ENCODE measurements at regions of chr14 and their contacts with region 1.

Region 1: DNA sequence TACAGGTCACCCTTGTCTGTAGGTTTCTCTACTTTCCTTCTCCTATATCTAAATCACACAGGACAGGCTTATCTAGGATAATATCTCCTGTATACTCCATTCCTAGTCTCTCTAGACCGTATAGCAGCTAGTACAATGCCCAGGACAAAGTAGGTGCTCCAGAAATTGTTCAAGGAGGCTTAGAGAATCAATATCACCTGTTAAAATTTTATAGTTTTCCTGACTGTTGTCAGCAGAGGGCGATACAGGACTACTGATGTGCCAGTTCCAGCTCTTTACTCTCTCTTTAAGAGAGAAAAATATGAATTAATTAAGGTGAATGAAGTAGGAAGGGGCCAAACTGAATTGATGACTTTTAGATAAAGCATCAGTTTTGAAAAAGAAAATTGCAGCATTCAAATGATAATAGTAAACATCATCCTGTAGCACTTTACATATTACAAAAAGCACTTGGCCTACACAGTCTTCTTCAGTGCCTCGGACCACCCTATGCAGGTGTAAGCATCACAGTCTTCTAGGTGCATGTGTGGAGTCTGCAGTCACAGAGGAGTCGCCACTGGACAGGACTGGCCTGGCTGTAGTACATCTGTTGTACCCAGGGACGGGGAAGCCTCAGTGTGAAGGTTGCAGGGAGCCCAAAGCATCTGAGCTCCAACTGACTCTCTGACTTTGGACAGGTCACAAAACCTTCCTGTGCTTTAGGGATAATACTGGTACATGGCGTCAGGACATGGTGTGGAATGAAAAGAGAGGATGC is 61.9 kb upstream of the MAX start:
- DNase-seq: peak; percentile 58
- H3K4me3 ChIP-seq: no peak overlapping the region
- H3K27ac ChIP-seq: no peak overlapping the region
- H3K4me1 ChIP-seq: no peaks in the 10 kb centered on the region
- H3K27me3 ChIP-seq: no peaks in the 10 kb centered on the region
- CTCF ChIP-seq: peak; percentile 36 to 41
- POLR2A ChIP-seq: no peak

Region 2: DNA sequence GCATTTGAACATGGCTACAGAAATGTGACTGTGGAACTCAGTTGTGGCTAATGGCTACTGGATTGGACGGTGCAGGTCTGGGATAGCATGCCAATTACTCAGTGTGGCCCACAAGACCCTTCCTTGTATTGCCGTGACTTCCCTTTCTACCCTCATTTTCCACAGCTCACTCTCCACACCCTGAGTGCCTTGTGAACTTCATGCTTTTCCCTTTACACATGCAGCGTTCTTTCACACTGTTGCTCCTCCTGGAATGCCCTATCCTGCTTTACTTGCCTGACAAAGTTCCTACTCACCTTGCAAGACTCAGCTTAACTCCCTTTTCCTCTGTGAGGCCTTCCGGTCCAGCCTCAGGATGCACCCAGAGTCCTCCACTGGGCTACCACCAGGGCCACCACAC is 15.1 kb before region 1 on chr14:
- CTCF ChIA-PET with region 1: interaction called, 13 read pairs
- POLR2A ChIA-PET with region 1: no interaction called
- dilution Hi-C with region 1: no loop called
- intact Hi-C with region 1: no loop called
- DNase-seq: no peak
- H3K4me3 ChIP-seq: no peak overlapping the region
- H3K27ac ChIP-seq: no peak overlapping the region
- H3K4me1 ChIP-seq: no peaks in the 10 kb centered on the region
- H3K27me3 ChIP-seq: peaks cover 2 to 3% of the 10 kb centered on the region in 2 experiments
- CTCF ChIP-seq: no peak
- POLR2A ChIP-seq: no peak

Region 3: DNA sequence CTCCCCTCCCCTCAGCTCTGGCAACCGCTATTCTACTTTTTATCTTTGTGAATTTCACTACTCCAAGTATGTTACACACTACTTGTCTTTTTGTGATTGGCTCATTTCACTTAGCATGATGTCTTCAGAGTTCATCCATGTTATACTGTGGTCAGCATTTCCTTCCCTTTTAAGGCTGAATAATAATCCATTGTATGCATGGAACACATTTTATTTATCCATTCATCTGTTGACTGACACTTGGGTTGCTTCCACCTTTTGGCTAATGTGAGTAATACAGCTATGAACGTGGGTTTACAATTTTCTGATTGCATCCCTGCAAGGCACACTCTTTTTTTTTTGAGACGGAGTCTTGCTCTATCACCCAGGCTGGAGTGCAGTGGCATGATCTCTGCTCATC is 195.3 kb after region 1 on chr14:
- CTCF ChIA-PET with region 1: interaction called, 14 read pairs
- POLR2A ChIA-PET with region 1: no interaction called
- dilution Hi-C with region 1: no loop called
- intact Hi-C with region 1: no loop called
- DNase-seq: peak; percentile 62
- H3K4me3 ChIP-seq: no peak overlapping the region
- H3K27ac ChIP-seq: no peak overlapping the region
- H3K4me1 ChIP-seq: peaks cover 13% of the 10 kb centered on the region
- H3K27me3 ChIP-seq: no peaks in the 10 kb centered on the region
- CTCF ChIP-seq: no peak
- POLR2A ChIP-seq: no peak

Region 4: GRCh38 chr14:65832431-65833266 is 668.4 kb after region 1 on chr14:
- CTCF ChIA-PET with region 1: interaction called, 82 read pairs
- POLR2A ChIA-PET with region 1: no interaction called
- dilution Hi-C with region 1: no loop called
- intact Hi-C with region 1: loop called (anchors 1 kb)
- DNase-seq: peak; percentile 27
- H3K4me3 ChIP-seq: no peak overlapping the region
- H3K27ac ChIP-seq: no peak overlapping the region
- H3K4me1 ChIP-seq: no peaks in the 10 kb centered on the region
- H3K27me3 ChIP-seq: peaks cover 0 to 5% of the 10 kb centered on the region in 2 experiments
- CTCF ChIP-seq: peak in 1 of 2 donors; percentile 38
- POLR2A ChIP-seq: no peak

Region 5: DNA sequence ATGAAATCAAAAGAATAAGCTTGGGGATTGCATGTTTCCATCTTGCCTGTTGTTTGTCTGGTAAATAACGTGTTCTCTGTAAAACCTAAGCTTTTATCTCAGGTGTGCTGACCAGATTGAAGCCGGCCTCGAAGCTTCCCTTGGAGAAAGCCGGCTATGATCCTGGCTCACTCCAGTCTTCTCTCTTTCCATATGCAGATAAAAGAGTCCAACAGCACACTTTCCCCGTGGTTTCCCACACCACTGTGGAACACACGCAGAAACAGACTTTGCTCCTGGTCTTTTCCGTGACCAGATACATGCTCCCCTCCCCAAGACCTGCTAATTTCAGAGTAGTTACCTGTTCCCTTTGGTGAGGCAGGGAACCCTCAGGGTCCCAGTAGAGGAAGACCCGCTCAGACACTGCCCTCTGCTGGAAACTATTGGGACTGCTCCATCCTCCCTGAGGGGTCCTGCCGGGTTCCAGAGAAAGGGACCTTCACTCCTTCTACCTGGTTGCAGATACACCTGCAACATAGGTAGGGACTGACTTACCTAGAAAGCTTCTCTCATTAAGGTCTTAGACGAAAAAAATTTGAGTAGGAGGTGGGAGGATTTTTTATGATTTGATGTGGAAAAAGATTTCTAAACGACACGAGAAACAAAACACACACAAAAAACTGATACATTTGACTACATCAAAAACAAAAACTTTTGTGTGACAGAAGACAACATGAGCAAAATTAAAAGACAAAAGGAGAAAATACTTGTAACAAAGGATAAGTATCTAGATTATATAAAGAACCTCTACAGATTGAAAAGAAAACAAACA is 906.5 kb after region 1 on chr14:
- CTCF ChIA-PET with region 1: interaction called, 22 read pairs
- POLR2A ChIA-PET with region 1: no interaction called
- dilution Hi-C with region 1: no loop called
- intact Hi-C with region 1: loop called (anchors 1 kb)
- DNase-seq: peak; percentile 39
- H3K4me3 ChIP-seq: no peak overlapping the region
- H3K27ac ChIP-seq: no peak overlapping the region
- H3K4me1 ChIP-seq: no peaks in the 10 kb centered on the region
- H3K27me3 ChIP-seq: peaks cover 0 to 6% of the 10 kb centered on the region in 2 experiments
- CTCF ChIP-seq: peak; percentile 78 to 88
- POLR2A ChIP-seq: no peak